ENCODE measurements at regions of chr17 and their contacts with region 1.

Region 1: DNA sequence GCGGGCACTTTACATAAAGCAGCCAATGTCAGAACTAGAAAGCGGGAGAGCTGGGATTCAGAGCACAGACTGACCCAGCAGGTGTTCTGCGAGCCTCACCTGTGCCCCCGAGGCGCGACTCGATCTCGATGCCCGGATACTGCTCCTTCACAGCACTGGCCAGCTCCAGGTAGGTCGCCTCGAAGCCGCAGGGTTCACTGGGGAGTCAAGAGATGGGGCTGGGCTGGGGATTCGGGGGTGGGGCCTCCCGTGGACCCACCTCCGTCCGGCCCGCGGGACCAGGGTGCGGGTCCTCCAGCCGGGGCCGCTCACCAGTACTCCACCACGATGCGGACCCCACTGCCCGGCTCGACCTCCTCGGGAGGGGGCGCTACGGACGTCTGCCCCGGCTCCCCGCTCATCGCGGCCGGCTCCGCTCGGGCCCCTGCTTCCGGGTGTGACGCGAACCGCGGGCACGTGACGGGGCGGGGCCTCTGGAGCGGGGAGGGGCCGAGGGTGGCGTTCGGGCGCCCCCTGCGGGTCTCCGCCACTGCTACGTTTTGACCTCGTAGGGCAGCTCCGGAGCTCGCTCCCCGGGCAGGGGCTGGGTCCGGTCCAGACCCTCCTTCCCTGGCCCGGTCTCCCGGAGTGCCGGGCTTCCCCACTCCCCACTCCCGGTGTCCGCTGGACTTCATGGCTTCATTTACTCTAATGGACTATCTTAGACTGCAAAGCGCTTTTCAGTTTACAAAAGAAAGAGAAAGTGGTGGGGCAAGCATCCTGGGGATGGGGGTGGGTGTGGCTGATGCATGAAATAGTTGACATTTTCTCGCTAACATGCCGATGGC is at the start of gene MIEN1:
- DNase-seq: peak; percentile 95
- H3K4me3 Mint-ChIP-seq: peak within 1 kb of the TSS; percentile 88
- H3K27ac Mint-ChIP-seq: peak within 1 kb of the TSS; percentile 83
- H3K4me1 Mint-ChIP-seq: peaks cover 19% of the 10 kb centered on the region
- H3K27me3 Mint-ChIP-seq: peaks cover 5% of the 10 kb centered on the region
- total RNA-seq, gene MIEN1: 40.1 to 45.1 TPM

Region 2: GRCh38 chr17:39541652-39542051 is 188.7 kb before region 1 on chr17:
- CTCF ChIA-PET with region 1: no interaction called
- POLR2A ChIA-PET with region 1: no interaction called
- DNase-seq: no peak
- H3K4me3 Mint-ChIP-seq: no peak overlapping the region
- H3K27ac Mint-ChIP-seq: no peak overlapping the region
- H3K4me1 Mint-ChIP-seq: peaks cover 20% of the 10 kb centered on the region
- H3K27me3 Mint-ChIP-seq: no peaks in the 10 kb centered on the region

Region 3: DNA sequence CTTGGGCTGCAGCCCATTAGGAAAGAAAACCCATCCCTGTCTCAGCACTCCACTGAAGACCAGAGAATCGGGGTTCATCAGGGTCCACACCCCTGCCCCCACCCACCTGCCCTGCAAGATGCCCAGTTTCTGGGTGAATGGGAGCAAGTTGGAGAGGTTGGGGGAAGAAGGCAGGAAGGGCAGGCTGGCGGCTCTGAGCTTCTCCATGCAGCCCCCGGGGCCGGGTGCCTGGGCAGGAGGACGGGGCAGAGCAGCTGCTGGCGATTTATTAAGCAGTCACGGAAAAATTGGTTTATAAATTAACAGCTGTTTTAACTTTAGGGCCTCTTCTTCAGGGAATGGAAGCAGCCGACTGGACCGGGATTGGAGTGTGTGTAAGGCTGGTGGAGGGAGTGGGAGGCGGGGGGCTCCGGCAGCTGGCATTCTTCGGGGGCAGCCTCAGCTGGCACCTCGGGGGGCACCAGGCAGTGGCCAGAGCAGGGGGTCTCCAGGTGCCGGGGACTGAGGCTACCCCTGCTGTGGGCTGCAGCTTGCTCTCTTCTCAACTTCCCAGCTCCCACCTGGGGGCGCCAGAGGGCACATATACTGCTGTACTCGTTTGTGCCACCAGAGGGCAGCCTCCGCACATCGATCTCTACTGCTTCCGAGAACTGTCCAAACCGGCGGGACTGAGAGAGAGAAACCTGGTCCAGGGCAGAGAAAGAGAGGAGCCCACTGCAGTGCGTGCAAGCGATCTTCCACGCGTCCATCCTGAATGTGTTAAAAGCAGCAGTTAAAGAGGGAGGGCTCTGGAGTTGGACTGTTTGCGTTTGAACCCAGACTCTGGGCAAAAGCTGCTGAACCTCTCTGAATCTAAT is 108.6 kb before region 1 on chr17:
- CTCF ChIA-PET with region 1: interaction called, 23 read pairs
- POLR2A ChIA-PET with region 1: interaction called, 9 read pairs
- DNase-seq: peak; percentile 92
- H3K4me3 Mint-ChIP-seq: peak overlapping the region; percentile 72
- H3K27ac Mint-ChIP-seq: peak overlapping the region; percentile 89
- H3K4me1 Mint-ChIP-seq: peaks cover 27% of the 10 kb centered on the region
- H3K27me3 Mint-ChIP-seq: peaks cover 49% of the 10 kb centered on the region

Region 4: GRCh38 chr17:39668199-39668966 is 61.9 kb before region 1 on chr17 and contains the start of gene PNMT:
- CTCF ChIA-PET with region 1: interaction called, 11 read pairs
- POLR2A ChIA-PET with region 1: interaction called, 6 read pairs
- DNase-seq: peak; percentile 70
- H3K4me3 Mint-ChIP-seq: peak within 1 kb of the TSS; percentile 27
- H3K27ac Mint-ChIP-seq: no peak within 1 kb of the TSS
- H3K4me1 Mint-ChIP-seq: peaks cover 6% of the 10 kb centered on the region
- H3K27me3 Mint-ChIP-seq: peaks cover 34% of the 10 kb centered on the region
- total RNA-seq, gene PNMT: not detected

Region 5: DNA sequence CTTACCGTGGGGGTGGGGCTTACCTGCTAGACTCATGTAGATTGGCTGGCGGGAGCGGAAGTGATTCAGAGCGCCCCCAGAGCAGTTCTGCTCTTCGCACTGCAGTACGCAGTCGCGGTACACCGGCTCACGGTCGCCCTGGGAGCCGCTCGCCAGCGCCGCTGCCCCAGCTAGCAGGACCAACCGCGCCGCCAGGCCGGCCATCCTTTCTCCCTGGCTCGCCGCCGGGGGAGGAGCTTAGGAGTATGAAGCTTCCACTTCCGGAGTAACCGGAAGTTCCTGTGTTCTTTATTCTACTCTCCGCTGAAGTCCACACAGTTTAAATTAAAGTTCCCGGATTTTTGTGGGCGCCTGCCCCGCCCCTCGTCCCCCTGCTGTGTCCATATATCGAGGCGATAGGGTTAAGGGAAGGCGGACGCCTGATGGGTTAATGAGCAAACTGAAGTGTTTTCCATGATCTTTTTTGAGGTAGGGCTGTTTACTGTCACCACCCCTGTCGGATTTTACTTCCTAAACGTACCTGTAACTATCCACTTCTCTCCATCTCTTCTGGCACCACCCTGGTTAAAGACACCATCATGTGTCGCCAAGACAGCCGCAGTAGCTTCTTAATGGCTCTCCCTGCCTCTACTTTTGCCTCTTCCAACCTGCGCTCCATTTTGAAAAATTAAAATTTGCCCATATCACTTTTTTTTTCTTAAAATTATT is 42.3 kb before region 1 on chr17 and contains the start of gene PGAP3:
- CTCF ChIA-PET with region 1: interaction called, 6 read pairs
- POLR2A ChIA-PET with region 1: interaction called, 15 read pairs
- DNase-seq: peak; percentile 85
- H3K4me3 Mint-ChIP-seq: peak within 1 kb of the TSS; percentile 95
- H3K27ac Mint-ChIP-seq: peak within 1 kb of the TSS; percentile 94
- H3K4me1 Mint-ChIP-seq: peaks cover 28% of the 10 kb centered on the region
- H3K27me3 Mint-ChIP-seq: no peaks in the 10 kb centered on the region
- total RNA-seq, gene PGAP3: 14.0 to 14.2 TPM

Region 6: DNA sequence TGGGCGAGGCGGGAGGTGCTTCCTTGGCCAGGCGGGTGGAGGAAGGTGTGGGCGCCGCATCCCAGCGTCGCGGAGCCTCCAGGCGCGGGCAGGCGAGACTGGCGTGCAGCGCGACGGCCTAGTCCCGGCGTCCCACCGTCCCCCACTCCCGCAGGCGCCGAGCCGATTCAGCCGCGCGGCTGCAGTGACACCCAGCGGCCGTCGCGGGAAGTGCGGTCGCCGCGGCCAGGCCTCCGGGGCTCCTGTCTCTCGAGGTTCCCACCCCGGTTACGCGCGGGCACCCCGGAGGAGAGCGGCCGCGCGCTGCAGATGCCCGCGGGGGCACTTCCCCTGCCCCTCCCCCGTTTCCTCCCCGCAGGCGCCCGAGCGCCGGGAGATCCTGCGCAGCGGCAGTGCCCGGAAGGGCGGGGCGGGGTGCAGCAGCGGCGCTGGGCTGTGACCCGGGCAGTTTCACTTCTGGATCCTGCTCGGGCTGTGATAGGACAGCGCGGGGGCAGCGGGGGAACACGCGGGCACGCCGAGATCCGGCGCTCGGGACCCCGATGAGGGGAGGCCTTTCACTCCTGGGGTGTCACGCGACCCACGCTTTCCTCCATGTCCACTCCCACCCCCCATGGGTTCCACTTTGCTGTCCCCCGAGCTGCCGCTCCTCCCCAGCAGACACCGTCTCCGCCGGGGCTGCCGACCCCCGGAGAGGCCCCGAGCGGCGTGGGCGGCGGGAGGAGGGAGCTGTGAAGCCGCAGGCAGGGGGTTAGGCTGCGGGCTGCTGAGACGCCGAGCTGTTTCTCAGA is 24.0 kb after region 1 on chr17:
- CTCF ChIA-PET with region 1: interaction called, 37 read pairs
- POLR2A ChIA-PET with region 1: interaction called, 32 read pairs
- DNase-seq: peak; percentile 99
- H3K4me3 Mint-ChIP-seq: peak overlapping the region; percentile 77
- H3K27ac Mint-ChIP-seq: peak overlapping the region; percentile 67
- H3K4me1 Mint-ChIP-seq: peaks cover 59% of the 10 kb centered on the region
- H3K27me3 Mint-ChIP-seq: no peaks in the 10 kb centered on the region

Region 7: DNA sequence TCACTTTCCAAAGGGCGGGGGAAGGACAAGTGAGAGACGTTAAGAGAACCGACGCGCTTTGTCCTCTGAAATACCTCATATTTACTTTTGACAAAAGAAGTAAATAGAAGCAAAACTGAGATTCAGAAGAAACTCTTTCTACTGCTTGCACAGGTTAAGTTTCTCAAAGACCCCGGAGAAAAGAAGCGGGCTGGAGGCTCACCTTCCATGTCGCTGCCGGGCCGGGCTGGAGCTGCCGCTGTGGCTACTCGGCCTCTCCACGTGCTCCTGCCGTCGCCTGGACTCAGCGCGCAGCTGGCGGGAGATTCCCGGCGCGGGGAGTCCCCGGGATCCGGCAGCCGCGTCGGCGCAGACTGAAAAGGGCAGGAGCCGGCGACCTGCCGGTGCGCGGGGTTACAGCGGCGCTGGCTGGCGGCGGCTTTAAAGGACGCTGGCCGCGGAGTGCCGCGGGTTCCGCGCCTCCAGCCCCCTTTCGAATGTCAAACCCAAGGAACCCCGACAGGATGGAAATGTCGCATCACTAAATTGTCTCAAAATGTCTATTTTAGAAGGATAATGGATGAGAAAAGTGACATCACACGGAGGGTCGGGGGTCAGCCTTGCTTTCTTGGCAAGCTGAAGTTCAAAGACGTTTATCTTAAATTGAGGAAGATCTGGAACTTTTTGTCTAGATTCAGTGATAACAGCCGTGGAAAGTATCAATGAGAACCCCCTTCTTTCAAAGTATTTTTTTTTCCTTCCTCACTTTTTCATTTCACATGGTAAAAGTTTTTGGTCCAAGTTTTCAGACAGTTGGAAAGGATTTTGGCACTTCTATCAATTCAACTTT is 133.8 kb after region 1 on chr17 and contains the start of gene IKZF3:
- CTCF ChIA-PET with region 1: interaction called, 3 read pairs
- POLR2A ChIA-PET with region 1: interaction called, 10 read pairs
- DNase-seq: peak; percentile 80
- H3K4me3 Mint-ChIP-seq: peak within 1 kb of the TSS; percentile 84
- H3K27ac Mint-ChIP-seq: peak within 1 kb of the TSS; percentile 80
- H3K4me1 Mint-ChIP-seq: peaks cover 64% of the 10 kb centered on the region
- H3K27me3 Mint-ChIP-seq: no peaks in the 10 kb centered on the region
- total RNA-seq, gene IKZF3: 37.9 to 38.2 TPM

Region 8: DNA sequence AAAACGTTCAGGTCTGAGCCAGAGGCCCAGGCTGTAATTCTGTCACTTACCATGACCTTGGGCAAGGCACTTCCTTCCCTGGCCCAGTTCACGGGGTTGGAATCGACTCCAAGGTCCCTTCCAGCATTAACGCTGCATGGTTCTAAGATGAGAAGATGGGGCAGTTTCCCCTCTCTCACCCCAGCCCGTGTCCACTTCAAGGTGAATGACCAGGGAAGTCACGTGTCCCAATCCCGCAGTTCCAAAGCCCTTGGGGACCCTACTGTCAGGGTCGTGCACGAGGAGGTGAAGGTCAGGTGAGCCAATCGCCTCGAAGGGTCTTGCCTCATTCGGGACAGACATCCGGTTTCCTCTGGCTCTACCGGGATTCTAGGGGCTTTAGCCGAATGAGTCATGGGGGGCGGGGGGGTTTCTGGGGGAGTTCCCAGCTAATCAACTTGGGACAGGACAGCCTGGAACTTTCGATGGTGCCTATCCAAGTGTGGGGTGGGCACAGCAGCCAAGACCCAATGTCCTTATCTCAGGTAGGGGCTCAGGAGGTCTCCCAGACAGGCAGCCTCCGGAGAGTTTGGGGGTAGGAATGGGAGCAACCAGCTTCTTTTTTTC is 284.2 kb after region 1 on chr17:
- CTCF ChIA-PET with region 1: no interaction called
- POLR2A ChIA-PET with region 1: no interaction called
- DNase-seq: no peak
- H3K4me3 Mint-ChIP-seq: no peak overlapping the region
- H3K27ac Mint-ChIP-seq: no peak overlapping the region
- H3K4me1 Mint-ChIP-seq: peaks cover 9% of the 10 kb centered on the region
- H3K27me3 Mint-ChIP-seq: peaks cover 7% of the 10 kb centered on the region

Measured in activated CD4-positive, alpha-beta memory T cell treated with anti-CD3 and anti-CD28 coated beads, Interleukin-2, amount 10 ng/mL, durations not matched to agents 7 days and 5 days (primary cell).